Activated CD4-positive, alpha-beta T cell treated with anti-CD3 and anti-CD28 coated beads, Interleukin-2, amount 10 ng/mL, durations not matched to agents 24 days and 14 days (primary cell): ENCODE measurements at regions of chr14 and their contacts with region 1.

Region 1: GRCh38 chr14:76710056-76711010 is 50.9 kb upstream of the VASH1 start:
- DNase-seq: peak; percentile 79
- H3K4me3 Mint-ChIP-seq: no peak overlapping the region
- H3K27ac Mint-ChIP-seq: no peak overlapping the region
- H3K4me1 Mint-ChIP-seq: no peaks in the 10 kb centered on the region
- H3K27me3 Mint-ChIP-seq: peaks cover 9% of the 10 kb centered on the region

Region 2: GRCh38 chr14:75982266-75983018 is 727.9 kb before region 1 on chr14:
- intact Hi-C with region 1: no loop called
- DNase-seq: peak; percentile 94
- H3K4me3 Mint-ChIP-seq: peak overlapping the region; percentile 84
- H3K27ac Mint-ChIP-seq: peak overlapping the region; percentile 74
- H3K4me1 Mint-ChIP-seq: peaks cover 40% of the 10 kb centered on the region
- H3K27me3 Mint-ChIP-seq: peaks cover 14% of the 10 kb centered on the region

Region 3: GRCh38 chr14:76647697-76648298 is 62.5 kb before region 1 on chr14:
- intact Hi-C with region 1: no loop called
- DNase-seq: peak; percentile 71
- H3K4me3 Mint-ChIP-seq: no peak overlapping the region
- H3K27ac Mint-ChIP-seq: no peak overlapping the region
- H3K4me1 Mint-ChIP-seq: no peaks in the 10 kb centered on the region
- H3K27me3 Mint-ChIP-seq: peaks cover 4% of the 10 kb centered on the region

Region 4: DNA sequence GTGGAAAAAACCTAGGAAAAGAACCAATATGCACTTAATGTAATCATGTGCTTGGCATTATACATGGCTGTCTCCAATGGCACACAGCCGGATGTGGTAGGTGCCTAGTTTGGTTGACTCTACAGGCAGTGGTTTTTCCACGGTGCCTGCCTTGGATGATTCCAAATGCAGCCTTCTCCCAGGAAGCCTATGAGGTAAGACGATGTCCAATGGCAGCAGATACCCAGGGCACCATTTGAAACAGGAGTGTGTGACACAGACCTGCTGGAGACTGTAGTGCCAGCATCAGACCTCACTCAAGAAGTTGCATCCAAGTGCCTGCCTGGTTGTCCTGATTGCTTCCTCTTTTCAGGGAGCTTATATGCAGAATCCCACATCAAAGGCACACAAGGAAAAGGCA is 37.1 kb before region 1 on chr14:
- intact Hi-C with region 1: no loop called
- DNase-seq: no peak
- H3K4me3 Mint-ChIP-seq: no peak overlapping the region
- H3K27ac Mint-ChIP-seq: no peak overlapping the region
- H3K4me1 Mint-ChIP-seq: no peaks in the 10 kb centered on the region
- H3K27me3 Mint-ChIP-seq: peaks cover 12% of the 10 kb centered on the region

Region 5: GRCh38 chr14:76720382-76720813 is 10.1 kb after region 1 on chr14:
- intact Hi-C with region 1: no loop called
- DNase-seq: no peak
- H3K4me3 Mint-ChIP-seq: no peak overlapping the region
- H3K27ac Mint-ChIP-seq: no peak overlapping the region
- H3K4me1 Mint-ChIP-seq: no peaks in the 10 kb centered on the region
- H3K27me3 Mint-ChIP-seq: peaks cover 18% of the 10 kb centered on the region

Region 6: GRCh38 chr14:76761136-76761959 is 51.0 kb after region 1 on chr14 and contains the start of gene VASH1:
- intact Hi-C with region 1: loop called (anchors 5 kb)
- DNase-seq: peak; percentile 90
- H3K4me3 Mint-ChIP-seq: peak within 1 kb of the TSS; percentile 84
- H3K27ac Mint-ChIP-seq: peak within 1 kb of the TSS; percentile 66
- H3K4me1 Mint-ChIP-seq: peaks cover 13% of the 10 kb centered on the region
- H3K27me3 Mint-ChIP-seq: peaks cover 60% of the 10 kb centered on the region
- total RNA-seq, gene VASH1: 5.8 and 6.9 TPM in 2 replicates

Region 7: DNA sequence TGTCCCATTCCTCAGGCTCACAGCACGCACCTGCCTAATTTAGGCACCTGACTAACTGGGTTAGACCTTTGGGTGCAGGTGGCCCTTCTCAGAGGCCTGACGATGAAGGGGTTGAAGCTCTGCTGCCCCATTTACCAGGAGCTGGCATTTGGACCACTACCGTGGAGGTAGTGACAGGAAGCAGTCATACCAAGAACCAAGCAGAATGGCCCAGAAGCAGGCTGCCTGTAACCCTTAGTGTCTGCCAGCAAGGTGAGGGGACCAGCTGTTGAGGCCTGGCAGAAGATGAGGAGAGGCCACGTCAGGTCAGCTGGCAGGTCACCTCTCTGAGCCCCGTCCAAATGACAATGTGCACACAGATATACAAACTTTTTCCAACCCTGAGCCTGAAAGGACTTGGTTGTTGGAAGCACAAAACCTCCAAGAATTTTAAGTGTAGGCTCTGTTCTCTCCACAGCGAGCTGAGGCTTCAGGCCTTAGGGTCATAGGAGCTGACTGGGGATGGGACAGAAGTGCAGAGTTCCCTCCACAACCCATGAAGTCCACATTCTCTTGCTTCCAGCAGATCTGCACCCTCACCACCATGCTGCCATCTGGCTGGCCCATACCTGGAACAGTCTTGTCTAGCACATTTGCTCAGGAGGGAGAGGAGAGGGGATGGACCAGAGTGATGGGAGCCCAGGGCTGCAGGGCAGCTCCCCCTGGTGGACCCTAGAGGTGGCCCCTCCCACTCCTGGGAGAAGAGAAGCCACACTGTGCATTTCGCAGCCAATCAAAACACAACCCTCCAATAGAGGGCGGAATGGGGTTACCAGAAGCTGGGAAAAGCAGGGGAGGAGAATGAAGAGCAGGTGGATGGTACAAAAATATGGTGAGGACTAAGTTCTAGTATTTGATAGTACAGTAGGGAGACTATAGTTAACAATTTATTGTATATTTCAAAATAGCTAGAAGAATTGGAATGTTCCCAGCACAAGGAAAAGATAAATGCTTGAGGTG is 74.2 kb after region 1 on chr14:
- intact Hi-C with region 1: loop called (anchors 1 kb)
- DNase-seq: peak; percentile 88
- H3K4me3 Mint-ChIP-seq: no peak overlapping the region
- H3K27ac Mint-ChIP-seq: peak overlapping the region; percentile 20
- H3K4me1 Mint-ChIP-seq: peaks cover 38% of the 10 kb centered on the region
- H3K27me3 Mint-ChIP-seq: no peaks in the 10 kb centered on the region

Region 8: DNA sequence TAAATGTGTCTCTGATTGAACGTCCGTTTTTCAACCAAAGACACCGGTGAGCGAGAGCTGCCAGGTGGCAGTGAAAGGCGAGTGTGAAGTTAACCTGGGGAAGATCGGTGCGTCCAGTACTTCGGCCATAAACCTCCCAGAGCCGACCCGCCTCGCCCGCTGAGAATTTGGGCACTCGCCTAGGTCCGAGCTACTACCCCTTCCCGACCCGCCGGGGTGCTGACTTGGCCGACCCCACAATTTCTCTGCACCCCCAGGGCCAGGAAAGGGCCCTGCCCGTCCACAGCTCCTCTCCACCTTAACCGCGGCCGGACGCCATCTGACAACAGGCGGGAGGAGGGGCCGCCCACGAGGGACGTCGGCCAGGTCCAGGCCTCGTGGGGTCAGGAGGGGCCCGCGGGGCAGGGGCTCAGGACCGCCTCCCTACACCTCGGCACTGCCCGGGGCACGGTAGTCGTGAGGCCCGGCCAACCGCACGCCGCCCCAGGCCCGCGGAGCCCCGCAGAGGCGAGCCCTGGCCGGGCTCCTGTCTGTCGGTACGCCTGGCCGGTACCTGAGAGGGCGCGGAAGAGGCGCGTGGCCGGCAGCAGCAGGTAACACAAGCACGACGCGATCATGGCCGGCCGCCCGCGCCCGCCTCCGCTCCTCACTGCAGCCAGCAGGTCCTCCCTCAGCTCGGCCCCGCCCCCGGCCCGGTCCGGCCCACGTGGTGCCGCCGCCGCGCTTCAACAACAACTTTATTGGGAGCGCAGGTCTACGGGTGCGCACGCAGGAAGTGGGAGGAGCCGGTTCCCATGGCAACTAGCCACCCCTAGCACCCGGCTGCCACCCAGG is 102.1 kb after region 1 on chr14 and contains the start of gene ANGEL1:
- intact Hi-C with region 1: loop called (anchors 1 kb)
- DNase-seq: peak; percentile 99
- H3K4me3 Mint-ChIP-seq: peak within 1 kb of the TSS; percentile 98
- H3K27ac Mint-ChIP-seq: peak within 1 kb of the TSS; percentile 91
- H3K4me1 Mint-ChIP-seq: peaks cover 21% of the 10 kb centered on the region
- H3K27me3 Mint-ChIP-seq: no peaks in the 10 kb centered on the region
- total RNA-seq, gene ANGEL1: 16.4 and 17.2 TPM in 2 replicates

Region 9: DNA sequence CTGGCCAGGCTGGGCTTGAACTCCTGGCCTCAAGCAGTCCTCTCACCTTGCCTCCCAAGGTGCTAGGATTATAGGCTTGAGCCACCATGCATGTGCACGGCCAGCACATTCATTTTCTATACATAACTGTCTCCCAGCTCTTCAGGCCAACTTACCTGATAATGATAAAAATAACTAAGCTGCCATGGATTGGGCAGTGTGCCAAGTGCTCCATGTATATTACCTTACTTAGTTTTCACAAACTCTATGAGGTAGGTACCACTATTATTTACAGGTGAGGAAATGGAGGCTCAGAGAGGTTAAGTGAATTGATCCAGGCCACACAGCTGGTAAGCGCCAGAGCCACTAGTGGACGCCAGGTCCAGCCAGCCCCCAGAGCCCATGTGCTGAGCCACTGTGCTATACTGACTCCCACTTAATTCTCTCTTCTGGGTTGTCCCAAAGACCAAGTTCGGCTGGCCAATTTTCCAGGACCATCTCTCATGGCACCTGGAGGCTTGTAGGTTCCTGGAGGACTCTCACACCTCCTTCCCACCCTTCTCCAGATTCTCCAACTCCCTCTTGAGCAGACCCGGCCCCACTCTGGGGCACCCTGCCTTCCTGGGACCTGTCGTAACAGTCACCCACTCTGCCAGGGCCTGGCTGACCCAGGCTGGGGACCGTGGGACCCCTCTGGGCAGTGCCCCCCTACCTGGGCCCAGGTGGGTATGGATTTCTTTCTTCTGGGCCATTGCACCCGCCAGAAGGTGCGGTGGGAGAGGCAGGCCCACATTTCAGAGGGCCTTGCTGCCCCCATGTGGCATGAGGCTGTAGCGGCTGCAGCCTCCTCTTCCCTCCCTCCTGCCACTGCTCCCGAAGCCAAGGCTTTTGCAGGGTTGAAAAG is 357.5 kb after region 1 on chr14:
- intact Hi-C with region 1: loop called (anchors 5 kb)
- DNase-seq: peak; percentile 88
- H3K4me3 Mint-ChIP-seq: no peak overlapping the region
- H3K27ac Mint-ChIP-seq: no peak overlapping the region
- H3K4me1 Mint-ChIP-seq: peaks cover 3% of the 10 kb centered on the region
- H3K27me3 Mint-ChIP-seq: peaks cover 11% of the 10 kb centered on the region